ENCODE measurements at regions of chr21 and their contacts with region 1.

Region 1: GRCh38 chr21:41431788-41432548 is 5.9 kb downstream of the MX1 start:
- DNase-seq: peak; percentile 53
- ATAC-seq: peak; percentile 98
- H3K4me3 Mint-ChIP-seq: peak overlapping the region; percentile 52
- H3K27ac Mint-ChIP-seq: peak overlapping the region; percentile 65
- H3K4me1 Mint-ChIP-seq: peaks cover 56% of the 10 kb centered on the region
- H3K27me3 Mint-ChIP-seq: no peaks in the 10 kb centered on the region
- CTCF ChIP-seq: no peak

Region 2: DNA sequence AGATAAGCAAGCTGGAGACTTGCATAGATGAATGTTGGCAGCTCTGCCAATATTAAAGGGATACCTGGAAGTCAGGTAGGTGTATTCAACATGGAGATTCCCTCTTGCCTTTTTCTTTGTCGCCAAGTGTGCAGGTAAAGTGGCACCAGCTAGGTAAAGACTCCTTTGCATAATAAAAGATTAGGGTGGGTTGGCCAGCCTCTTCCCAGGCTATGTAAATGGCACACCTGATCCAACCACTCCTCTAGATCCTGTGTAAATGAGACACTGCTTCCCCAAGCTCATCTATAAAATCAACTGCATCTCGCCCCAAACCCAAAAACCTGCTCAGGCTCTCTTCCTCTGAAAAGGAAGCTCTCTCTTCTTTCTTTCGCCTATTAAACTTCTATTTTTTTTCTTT is 484.3 kb before region 1 on chr21:
- CTCF ChIA-PET with region 1: no interaction called
- POLR2A ChIA-PET with region 1: no interaction called
- intact Hi-C with region 1: no loop called
- DNase-seq: no peak
- ATAC-seq: no peak
- H3K4me3 Mint-ChIP-seq: no peak overlapping the region
- H3K27ac Mint-ChIP-seq: no peak overlapping the region
- H3K4me1 Mint-ChIP-seq: no peaks in the 10 kb centered on the region
- H3K27me3 Mint-ChIP-seq: no peaks in the 10 kb centered on the region
- CTCF ChIP-seq: no peak

Region 3: GRCh38 chr21:41229509-41230248 is 202.3 kb before region 1 on chr21:
- CTCF ChIA-PET with region 1: no interaction called
- POLR2A ChIA-PET with region 1: no interaction called
- intact Hi-C with region 1: loop called (anchors 5 kb)
- DNase-seq: no peak
- ATAC-seq: peak; percentile 82
- H3K4me3 Mint-ChIP-seq: peak overlapping the region; percentile 78
- H3K27ac Mint-ChIP-seq: peak overlapping the region; percentile 91
- H3K4me1 Mint-ChIP-seq: peaks cover 82% of the 10 kb centered on the region
- H3K27me3 Mint-ChIP-seq: no peaks in the 10 kb centered on the region
- CTCF ChIP-seq: no peak

Region 4: DNA sequence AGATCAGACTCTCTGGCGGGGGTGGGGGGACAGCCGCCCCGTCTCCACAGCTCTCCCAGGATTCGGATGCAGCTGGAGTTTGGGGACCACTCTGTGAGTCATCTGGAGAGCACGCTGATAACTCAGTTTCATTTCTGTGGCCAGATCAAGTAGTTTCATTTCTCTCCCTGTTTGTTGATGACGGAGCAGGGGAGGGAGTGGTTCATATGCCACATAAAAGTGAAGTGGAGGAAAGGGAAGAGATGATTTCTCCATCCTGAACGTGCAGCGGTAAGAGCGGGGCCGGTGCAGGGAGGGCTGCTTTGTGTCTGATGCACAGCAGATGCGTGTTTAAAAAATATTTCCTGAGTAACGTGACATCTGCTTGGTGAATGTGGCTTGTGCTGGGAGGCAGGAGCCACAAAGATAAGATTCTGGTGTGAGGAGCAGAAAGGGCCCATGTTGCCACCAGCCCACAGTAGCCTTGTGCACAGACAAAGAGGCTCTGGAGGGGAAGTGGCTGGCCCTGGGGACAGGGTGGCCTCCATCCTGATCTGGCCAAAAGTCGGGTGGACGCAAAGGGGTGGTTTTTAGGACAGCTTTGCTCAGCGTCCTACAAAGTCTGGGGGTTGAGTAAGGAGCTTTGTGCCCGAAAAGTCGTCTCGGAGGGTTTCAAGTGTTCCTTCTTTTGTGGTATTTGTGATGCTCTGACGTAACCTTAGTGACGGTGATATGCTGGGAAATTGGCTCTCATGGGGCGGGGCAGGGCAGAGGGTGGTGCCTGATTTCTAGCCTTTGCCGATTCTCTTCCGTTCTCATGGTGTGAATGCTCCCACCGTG is 70.0 kb before region 1 on chr21 and contains the start of gene MX2:
- CTCF ChIA-PET with region 1: interaction called, 9 read pairs
- POLR2A ChIA-PET with region 1: interaction called, 13 read pairs
- intact Hi-C with region 1: no loop called
- DNase-seq: peak; percentile 51
- ATAC-seq: peak; percentile 78
- H3K4me3 Mint-ChIP-seq: peak within 1 kb of the TSS; percentile 84
- H3K27ac Mint-ChIP-seq: peak within 1 kb of the TSS; percentile 97
- H3K4me1 Mint-ChIP-seq: peaks cover 61% of the 10 kb centered on the region
- H3K27me3 Mint-ChIP-seq: no peaks in the 10 kb centered on the region
- CTCF ChIP-seq: no peak
- total RNA-seq, gene MX2: 32.6 and 34.4 TPM in 2 replicates

Region 5: GRCh38 chr21:41419911-41420862 is 11.8 kb before region 1 on chr21:
- CTCF ChIA-PET with region 1: no interaction called
- POLR2A ChIA-PET with region 1: no interaction called
- intact Hi-C with region 1: loop called (anchors 1 kb)
- DNase-seq: peak; percentile 47
- ATAC-seq: peak; percentile 93
- H3K4me3 Mint-ChIP-seq: peak overlapping the region; percentile 81
- H3K27ac Mint-ChIP-seq: peak overlapping the region; percentile 82
- H3K4me1 Mint-ChIP-seq: peaks cover 61% of the 10 kb centered on the region
- H3K27me3 Mint-ChIP-seq: no peaks in the 10 kb centered on the region
- CTCF ChIP-seq: no peak

Region 6: GRCh38 chr21:41557884-41558283 is 125.9 kb after region 1 on chr21:
- CTCF ChIA-PET with region 1: no interaction called
- POLR2A ChIA-PET with region 1: no interaction called
- intact Hi-C with region 1: no loop called
- DNase-seq: no peak
- ATAC-seq: no peak
- H3K4me3 Mint-ChIP-seq: no peak overlapping the region
- H3K27ac Mint-ChIP-seq: no peak overlapping the region
- H3K4me1 Mint-ChIP-seq: no peaks in the 10 kb centered on the region
- H3K27me3 Mint-ChIP-seq: peaks cover 13% of the 10 kb centered on the region
- CTCF ChIP-seq: no peak